Caco-2 (cell line): ENCODE measurements at regions of chr12 and their contacts with region 1.

Region 1: DNA sequence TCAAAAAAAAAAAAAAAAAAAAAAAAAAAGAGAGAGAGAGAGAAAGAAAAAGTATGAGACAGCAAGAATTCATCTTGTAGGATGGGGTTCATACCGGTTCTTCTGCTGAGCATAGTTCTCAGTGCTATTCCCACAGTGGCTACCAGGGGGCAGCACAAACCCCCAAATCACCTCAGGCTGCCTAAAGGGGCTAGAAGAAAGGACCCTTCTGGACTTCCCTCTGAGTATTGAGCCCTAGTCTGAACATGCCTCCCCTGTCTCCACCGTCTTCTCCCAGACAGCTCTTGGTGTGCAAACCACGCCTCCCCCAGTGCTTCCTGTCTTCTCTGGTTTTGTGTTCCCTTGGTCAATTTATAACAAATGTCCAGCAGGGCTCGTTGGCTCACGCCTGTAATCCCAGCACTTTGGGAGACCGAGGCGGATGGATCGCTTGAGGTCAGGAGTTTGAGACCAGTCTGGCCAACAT is 31.3 kb upstream of the SMUG1 start:
- DNase-seq: peak; percentile 68 to 79
- H3K4me3 ChIP-seq: no peak overlapping the region
- H3K4me3 Mint-ChIP-seq: no peak overlapping the region
- H3K27ac Mint-ChIP-seq: no peak overlapping the region
- H3K4me1 ChIP-seq: peaks cover 4% of the 10 kb centered on the region; the same call in 1 of the 2 replicates
- H3K4me1 Mint-ChIP-seq: no peaks in the 10 kb centered on the region
- H3K27me3 ChIP-seq: no peaks in the 10 kb centered on the region
- H3K27me3 Mint-ChIP-seq: no peaks in the 10 kb centered on the region
- CTCF ChIP-seq: peak; percentile 86

Region 2: GRCh38 chr12:54368709-54369583 is 148.8 kb after region 1 on chr12:
- CTCF ChIA-PET with region 1: no interaction called
- POLR2A ChIA-PET with region 1: no interaction called
- intact Hi-C with region 1: loop called (anchors 1 kb)
- DNase-seq: peak; percentile 86 to 87
- H3K4me3 ChIP-seq: no peak overlapping the region
- H3K4me3 Mint-ChIP-seq: peak overlapping the region; percentile 23
- H3K27ac Mint-ChIP-seq: no peak overlapping the region
- H3K4me1 ChIP-seq: peaks cover 6% of the 10 kb centered on the region; the same call in 1 of the 2 replicates
- H3K4me1 Mint-ChIP-seq: no peaks in the 10 kb centered on the region
- H3K27me3 ChIP-seq: no peaks in the 10 kb centered on the region
- H3K27me3 Mint-ChIP-seq: no peaks in the 10 kb centered on the region
- CTCF ChIP-seq: peak; percentile 75 to 86